Lower lobe of right lung (tissue), 2 donors: ENCODE measurements at regions of chr14 and their contacts with region 1.

Region 1: DNA sequence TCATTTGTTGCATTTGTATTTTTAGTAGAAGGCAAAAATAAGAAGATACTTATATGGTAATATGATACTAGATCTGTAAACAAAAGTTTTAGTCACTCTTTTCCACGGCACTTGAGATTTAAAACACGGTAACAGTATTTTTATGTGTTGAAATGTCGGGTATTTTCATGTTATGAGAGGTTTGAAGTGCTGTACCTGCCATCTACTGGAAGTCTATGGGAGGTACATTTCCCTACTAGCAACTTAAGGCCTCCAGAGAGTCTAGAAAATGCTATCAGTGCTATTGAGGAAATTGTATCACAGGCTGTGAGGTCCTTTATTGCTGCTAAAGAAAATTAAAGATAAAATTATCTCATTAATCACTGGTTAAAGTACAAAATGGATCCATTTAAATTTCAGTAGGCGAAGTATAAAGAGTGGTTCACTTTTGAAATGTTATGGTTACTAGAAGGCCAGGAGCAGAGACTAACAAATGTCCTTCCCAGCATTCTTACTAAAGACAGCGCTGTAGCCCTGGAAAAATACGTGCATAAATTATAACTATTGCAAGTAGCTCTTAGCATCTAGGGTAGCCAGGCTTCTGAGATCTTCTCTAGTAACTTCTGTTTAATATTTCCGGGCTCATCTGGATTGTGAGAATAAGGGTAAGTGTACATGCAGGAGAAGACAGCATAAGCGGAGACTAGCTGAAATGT is 77.6 kb upstream of the PRKD1 start:
- DNase-seq: no peak
- ATAC-seq: peak; percentile 68 to 76
- H3K4me3 ChIP-seq: no peak overlapping the region
- H3K27ac ChIP-seq: no peak overlapping the region
- H3K4me1 ChIP-seq: no peaks in the 10 kb centered on the region
- H3K27me3 ChIP-seq: no peaks in the 10 kb centered on the region
- CTCF ChIP-seq: peak; percentile 69

Region 2: GRCh38 chr14:29548948-29549370 is 456.3 kb before region 1 on chr14:
- intact Hi-C with region 1: loop called (anchors 10 kb)
- DNase-seq: no peak
- ATAC-seq: peak; percentile 67 to 73
- H3K4me3 ChIP-seq: no peak overlapping the region
- H3K27ac ChIP-seq: no peak overlapping the region
- H3K4me1 ChIP-seq: no peaks in the 10 kb centered on the region
- H3K27me3 ChIP-seq: no peaks in the 10 kb centered on the region
- CTCF ChIP-seq: peak; percentile 58